ENCODE measurements at regions of chr5 and their contacts with region 1.

Region 1: DNA sequence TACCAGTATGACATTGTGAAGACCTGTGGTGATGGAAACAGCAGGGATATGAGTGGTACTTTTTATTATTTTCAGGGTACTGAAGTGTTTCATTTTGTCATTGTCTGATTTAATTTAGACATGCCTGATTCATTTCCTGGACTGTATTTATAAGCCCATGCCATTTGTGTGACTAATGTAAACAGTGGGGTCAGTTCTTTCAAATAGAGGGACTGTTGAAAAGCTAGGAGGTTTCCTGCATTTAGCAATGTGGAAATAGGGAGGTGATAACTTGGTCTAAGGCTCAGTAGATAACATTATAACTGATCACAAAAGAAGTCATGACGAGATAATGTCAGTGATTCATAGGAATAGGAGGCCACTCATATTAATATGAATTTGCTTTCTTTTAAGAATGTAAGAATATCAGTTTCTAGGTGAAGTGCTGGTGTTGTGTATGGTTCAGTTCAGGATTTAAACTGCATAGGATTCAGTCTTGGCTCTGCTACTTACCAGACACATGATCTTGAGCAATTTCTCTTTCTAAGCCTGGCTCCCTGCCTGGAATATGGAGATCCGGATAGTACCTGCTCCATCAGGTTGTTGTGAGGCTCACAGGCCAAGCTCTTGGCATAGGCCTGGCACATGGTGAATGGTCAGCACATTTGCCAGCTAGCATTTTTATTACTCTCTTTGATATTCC is 7.5 kb downstream of the RASGRF2 start:
- DNase-seq: no peak
- ATAC-seq: peak; percentile 63
- H3K4me3 Mint-ChIP-seq: no peak overlapping the region
- H3K27ac Mint-ChIP-seq: peak overlapping the region; percentile 47
- H3K4me1 Mint-ChIP-seq: peaks cover 67% of the 10 kb centered on the region
- H3K27me3 Mint-ChIP-seq: no peaks in the 10 kb centered on the region

Region 2: DNA sequence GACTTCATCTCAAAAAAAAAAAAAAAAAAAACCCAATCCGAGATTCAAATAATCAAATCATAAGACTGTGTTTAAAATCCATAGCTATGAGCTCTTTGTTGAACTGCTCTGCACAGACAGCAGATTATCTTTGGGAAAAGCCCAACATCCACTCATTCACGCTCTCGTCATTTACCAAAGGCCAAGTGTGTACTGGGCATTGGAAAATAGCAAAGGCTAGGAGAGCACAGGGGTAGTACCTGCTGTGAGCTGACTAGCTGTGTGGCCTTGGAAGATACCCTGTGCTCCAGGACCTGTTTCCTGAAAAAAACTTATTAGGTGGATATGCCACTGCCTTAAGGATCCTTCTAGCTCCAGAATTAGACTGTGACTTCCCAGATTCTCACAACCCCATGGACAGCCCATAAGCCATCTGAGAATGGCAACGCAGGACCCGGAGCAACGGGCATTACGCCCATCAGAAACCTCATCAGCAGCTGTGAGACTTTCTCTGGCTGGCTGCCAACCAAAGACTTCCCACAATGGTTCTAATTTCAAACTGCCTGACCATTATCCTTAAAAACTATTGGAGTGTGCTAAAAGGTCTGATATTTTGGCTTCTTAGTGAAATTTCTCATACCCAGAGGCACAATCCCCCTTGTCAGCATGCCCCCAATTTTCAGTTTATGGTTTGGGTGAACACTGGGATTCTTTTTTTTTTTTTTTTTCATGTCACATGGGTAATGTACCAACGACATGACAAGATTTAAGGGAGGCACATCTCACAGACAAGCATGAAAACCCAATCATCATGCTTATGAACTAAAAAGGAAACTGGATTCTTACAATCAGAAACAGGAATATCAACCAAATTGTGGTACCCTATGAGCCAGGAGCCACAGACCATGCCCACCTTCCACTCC is 728.6 kb before region 1 on chr5:
- CTCF ChIA-PET with region 1: no interaction called
- POLR2A ChIA-PET with region 1: interaction called, 11 read pairs
- intact Hi-C with region 1: no loop called
- DNase-seq: no peak
- ATAC-seq: peak; percentile 21
- H3K4me3 Mint-ChIP-seq: peak overlapping the region; percentile 37
- H3K27ac Mint-ChIP-seq: peak overlapping the region; percentile 80
- H3K4me1 Mint-ChIP-seq: peaks cover 69% of the 10 kb centered on the region
- H3K27me3 Mint-ChIP-seq: no peaks in the 10 kb centered on the region

Region 3: GRCh38 chr5:80809451-80809850 is 158.2 kb before region 1 on chr5:
- CTCF ChIA-PET with region 1: no interaction called
- POLR2A ChIA-PET with region 1: no interaction called
- intact Hi-C with region 1: no loop called
- DNase-seq: no peak
- ATAC-seq: no peak
- H3K4me3 Mint-ChIP-seq: no peak overlapping the region
- H3K27ac Mint-ChIP-seq: no peak overlapping the region
- H3K4me1 Mint-ChIP-seq: peaks cover 8% of the 10 kb centered on the region
- H3K27me3 Mint-ChIP-seq: no peaks in the 10 kb centered on the region

Measured in activated CD4-positive, alpha-beta T cell treated with anti-CD3 and anti-CD28 coated beads for 36 hours (primary cell).